Heart right ventricle (tissue), 16 donors: ENCODE measurements at regions of chr6 and their contacts with region 1.

Region 1: GRCh38 chr6:26568601-26569432 is 27.9 kb upstream of the ABT1 start:
- DNase-seq: peak; percentile 90 to 96
- ATAC-seq: peak; percentile 81 to 90 (median 85)
- H3K4me3 ChIP-seq: peak overlapping the region; percentile 16 to 59 (median 50)
- H3K27ac ChIP-seq: peak overlapping the region in 4 of 10 donors; percentile 2 to 63 (median 50)
- H3K4me1 ChIP-seq: peaks cover 0 to 27% (median 4%) of the 10 kb centered on the region in 9 donors
- H3K27me3 ChIP-seq: no peaks in the 10 kb centered on the region
- CTCF ChIP-seq: peak in 4 of 9 donors; percentile 25 to 36 (median 32)

Region 2: GRCh38 chr6:26103770-26104456 is 464.9 kb before region 1 on chr6:
- intact Hi-C with region 1: no loop called
- DNase-seq: peak; percentile 83 to 90
- ATAC-seq: peak; percentile 89 to 96 (median 95)
- H3K4me3 ChIP-seq: peak overlapping the region; percentile 22 to 75 (median 60)
- H3K27ac ChIP-seq: peak overlapping the region; percentile 37 to 91 (median 80)
- H3K4me1 ChIP-seq: peaks cover 0 to 20% (median 10%) of the 10 kb centered on the region in 9 donors
- H3K27me3 ChIP-seq: no peaks in the 10 kb centered on the region
- CTCF ChIP-seq: peak in 8 of 9 donors; percentile 13 to 57 (median 40)

Region 3: GRCh38 chr6:26312501-26313390 is 256.1 kb before region 1 on chr6:
- intact Hi-C with region 1: loop called in 1 of 10 experiments (anchors 10 kb)
- DNase-seq: peak; percentile 59 to 83
- ATAC-seq: peak; percentile 66 to 95 (median 86)
- H3K4me3 ChIP-seq: peak overlapping the region; percentile 5 to 59 (median 50)
- H3K27ac ChIP-seq: peak overlapping the region in 6 of 10 donors; percentile 21 to 60 (median 52)
- H3K4me1 ChIP-seq: peaks cover 0 to 31% (median 7%) of the 10 kb centered on the region in 9 donors
- H3K27me3 ChIP-seq: peaks cover 0 to 15% (median 6%) of the 10 kb centered on the region in 7 donors
- CTCF ChIP-seq: no peak

Region 4: GRCh38 chr6:26520853-26521599 is 47.8 kb before region 1 on chr6:
- intact Hi-C with region 1: loop called in 5 of 10 experiments (anchors 1 to 5 kb)
- DNase-seq: peak; percentile 89 to 90
- ATAC-seq: peak; percentile 85 to 97 (median 92)
- H3K4me3 ChIP-seq: peak overlapping the region; percentile 28 to 70 (median 58)
- H3K27ac ChIP-seq: peak overlapping the region; percentile 86 to 99 (median 95)
- H3K4me1 ChIP-seq: peaks cover 0 to 39% (median 12%) of the 10 kb centered on the region in 9 donors
- H3K27me3 ChIP-seq: no peaks in the 10 kb centered on the region
- CTCF ChIP-seq: no peak

Region 5: DNA sequence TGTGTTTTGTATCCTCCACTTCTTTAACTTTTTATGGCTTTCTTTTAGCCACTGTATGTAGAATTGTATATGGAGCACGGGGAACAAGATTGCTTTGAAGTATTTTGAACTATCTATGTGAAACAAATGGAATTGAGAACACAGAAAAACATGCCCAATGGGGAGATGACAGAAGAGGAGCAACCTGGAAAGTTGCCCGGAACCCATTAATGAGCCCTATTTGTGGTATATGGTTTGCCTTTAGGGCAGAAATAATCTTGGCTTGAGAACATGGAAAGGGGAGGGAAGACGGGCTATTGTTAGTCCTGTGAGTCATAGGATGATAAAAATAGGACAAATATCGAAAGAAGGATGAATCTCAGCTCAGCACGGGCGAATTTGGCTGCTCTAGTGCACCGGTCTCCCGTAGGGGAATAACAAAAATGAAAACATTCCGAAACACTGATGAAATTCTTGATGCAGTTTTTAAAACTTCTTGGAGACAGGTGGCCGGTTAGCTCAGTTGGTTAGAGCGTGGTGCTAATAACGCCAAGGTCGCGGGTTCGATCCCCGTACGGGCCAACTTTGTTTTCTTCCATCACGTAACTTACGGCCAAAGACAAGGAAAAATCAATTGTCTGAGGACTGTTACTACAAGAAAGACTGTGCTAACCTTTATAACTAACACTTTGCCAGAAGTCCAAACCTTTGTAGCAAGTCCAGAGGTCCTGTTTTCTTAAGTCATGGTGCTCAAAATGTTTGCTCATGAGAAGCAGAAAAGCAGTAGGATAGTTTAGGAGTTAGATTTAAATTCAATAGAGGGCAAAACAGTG is 15.0 kb before region 1 on chr6:
- intact Hi-C with region 1: loop called in 3 of 10 experiments (anchors 1 to 2 kb)
- DNase-seq: peak; percentile 77 to 78
- ATAC-seq: peak; percentile 71 to 93 (median 85)
- H3K4me3 ChIP-seq: peak overlapping the region; percentile 30 to 64 (median 58)
- H3K27ac ChIP-seq: peak overlapping the region in 9 of 10 donors; percentile 66 to 87 (median 77)
- H3K4me1 ChIP-seq: peaks cover 0 to 47% (median 15%) of the 10 kb centered on the region in 9 donors
- H3K27me3 ChIP-seq: no peaks in the 10 kb centered on the region
- CTCF ChIP-seq: no peak

Region 6: DNA sequence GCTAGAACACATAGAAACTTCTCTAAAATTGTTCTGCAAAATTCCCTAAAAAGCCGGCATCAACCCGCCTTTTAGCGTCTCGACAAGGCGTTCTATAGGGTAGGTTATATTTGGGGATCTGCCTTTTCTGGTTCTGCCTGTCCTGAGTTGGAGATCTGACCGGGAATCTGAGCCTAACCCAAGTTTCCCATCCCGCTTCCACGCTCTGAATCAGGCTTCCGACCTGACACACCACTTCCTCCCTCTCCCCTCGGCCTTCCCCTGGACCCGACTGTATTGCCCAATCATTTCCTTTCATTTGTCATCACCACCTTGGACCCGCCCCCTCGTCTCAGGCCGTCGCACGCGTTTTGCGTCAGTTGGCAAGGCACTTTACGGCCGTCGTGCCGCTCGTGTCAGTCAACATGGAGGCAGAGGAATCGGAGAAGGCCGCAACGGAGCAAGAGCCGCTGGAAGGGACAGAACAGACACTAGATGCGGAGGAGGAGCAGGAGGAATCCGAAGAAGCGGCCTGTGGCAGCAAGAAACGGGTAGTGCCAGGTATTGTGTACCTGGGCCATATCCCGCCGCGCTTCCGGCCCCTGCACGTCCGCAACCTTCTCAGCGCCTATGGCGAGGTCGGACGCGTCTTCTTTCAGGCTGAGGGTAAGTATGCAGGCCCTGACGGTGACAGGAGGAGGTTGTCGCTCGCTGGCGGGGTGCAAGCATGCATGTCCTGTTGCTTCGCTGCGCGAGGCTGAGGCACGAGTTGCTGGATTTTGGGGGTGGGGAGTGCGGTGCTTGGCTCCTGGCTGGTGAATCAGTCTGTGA is 28.0 kb after region 1 on chr6 and contains the start of gene ABT1:
- intact Hi-C with region 1: loop called in 4 of 10 experiments (anchors 1 to 2 kb)
- DNase-seq: peak; percentile 97 to 99
- ATAC-seq: peak; percentile 98 to 99 (median 99)
- H3K4me3 ChIP-seq: peak within 1 kb of the TSS; percentile 72 to 96 (median 87)
- H3K27ac ChIP-seq: peak within 1 kb of the TSS; percentile 59 to 95 (median 88)
- H3K4me1 ChIP-seq: peaks cover 0 to 39% (median 18%) of the 10 kb centered on the region in 9 donors
- H3K27me3 ChIP-seq: peaks cover 0 to 33% (median 24%) of the 10 kb centered on the region in 7 donors
- CTCF ChIP-seq: no peak
- total RNA-seq, gene ABT1: 5.8 to 10.2 (median 7.4) TPM